ENCODE measurements at regions of chr6 and their contacts with region 1.

Region 1: GRCh38 chr6:149431905-149432775 is 32.1 kb downstream of the SUMO4 start:
- DNase-seq: peak; percentile 95
- H3K4me3 ChIP-seq: peak overlapping the region in 1 of 4 donors; percentile 10
- H3K27ac ChIP-seq: no peak overlapping the region
- H3K4me1 ChIP-seq: peaks cover 0 to 24% (median 9%) of the 10 kb centered on the region in 4 donors
- H3K27me3 ChIP-seq: no peaks in the 10 kb centered on the region
- CTCF ChIP-seq: peak; percentile 90 to 97 (median 96)
- EP300 ChIP-seq: no peak
- POLR2A ChIP-seq: no peak

Region 2: DNA sequence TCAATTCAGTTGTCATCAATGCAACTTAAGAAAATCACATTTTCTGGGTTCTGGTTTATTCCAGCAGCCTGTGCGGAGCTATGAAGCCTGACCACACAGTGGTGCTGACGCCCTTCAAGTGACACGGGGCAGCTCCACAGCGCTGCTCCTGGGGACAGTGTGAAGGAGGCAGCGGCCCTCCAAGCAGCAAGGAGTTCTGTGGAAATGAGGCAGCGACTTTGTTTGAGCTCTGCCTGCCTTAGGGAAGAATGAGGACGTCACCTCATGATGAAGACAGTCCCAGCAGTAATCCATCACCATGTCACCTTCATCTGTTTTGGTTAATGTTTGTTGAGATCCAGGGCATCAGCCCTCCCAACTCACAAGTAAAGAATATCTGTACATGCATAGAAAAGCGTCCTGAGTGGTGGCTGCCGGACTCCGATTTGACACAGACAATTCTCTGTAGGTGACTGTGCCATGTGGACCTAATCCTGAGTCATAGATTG is 853.9 kb before region 1 on chr6:
- intact Hi-C with region 1: loop called (anchors 10 kb)
- DNase-seq: peak; percentile 92
- H3K4me3 ChIP-seq: no peak overlapping the region
- H3K27ac ChIP-seq: peak overlapping the region in 1 of 4 donors; percentile 27
- H3K4me1 ChIP-seq: peaks cover 0 to 13% (median 4%) of the 10 kb centered on the region in 4 donors
- H3K27me3 ChIP-seq: no peaks in the 10 kb centered on the region
- CTCF ChIP-seq: peak; percentile 81 to 91 (median 84)
- EP300 ChIP-seq: no peak
- POLR2A ChIP-seq: no peak

Region 3: DNA sequence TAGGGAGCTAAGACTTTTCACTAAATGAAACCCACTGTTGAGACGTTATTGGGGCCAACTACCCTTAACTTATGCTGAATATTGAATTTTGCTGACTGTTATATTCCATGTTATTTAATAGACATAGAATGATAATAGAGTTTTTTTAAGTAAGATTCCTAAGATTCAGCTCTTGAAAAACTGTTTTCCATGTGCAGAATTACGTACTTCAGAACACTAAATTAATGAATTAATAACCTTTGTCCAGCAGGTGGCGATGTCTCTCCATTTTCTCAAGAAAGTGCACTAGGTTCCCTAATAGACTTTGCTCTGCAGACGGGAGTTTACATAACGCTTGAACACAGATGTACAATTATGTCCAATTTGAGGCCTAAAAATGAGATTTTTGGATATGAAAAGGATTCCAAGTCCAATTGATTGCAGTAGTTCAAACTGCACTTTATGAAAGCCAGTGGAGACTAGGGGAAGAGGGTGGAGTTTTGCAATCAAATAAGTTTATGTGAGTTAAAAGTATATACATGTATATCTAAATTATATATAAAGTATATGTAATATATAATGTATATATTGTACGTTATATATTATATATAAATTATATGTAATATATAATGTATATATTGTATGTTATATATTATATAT is 403.3 kb before region 1 on chr6:
- intact Hi-C with region 1: loop called (anchors 1 kb)
- DNase-seq: peak; percentile 85
- H3K4me3 ChIP-seq: no peak overlapping the region
- H3K27ac ChIP-seq: peak overlapping the region in 1 of 4 donors; percentile 20
- H3K4me1 ChIP-seq: peaks cover 0 to 23% (median 20%) of the 10 kb centered on the region in 4 donors
- H3K27me3 ChIP-seq: no peaks in the 10 kb centered on the region
- CTCF ChIP-seq: peak; percentile 49 to 73 (median 66)
- EP300 ChIP-seq: no peak
- POLR2A ChIP-seq: no peak

Region 4: DNA sequence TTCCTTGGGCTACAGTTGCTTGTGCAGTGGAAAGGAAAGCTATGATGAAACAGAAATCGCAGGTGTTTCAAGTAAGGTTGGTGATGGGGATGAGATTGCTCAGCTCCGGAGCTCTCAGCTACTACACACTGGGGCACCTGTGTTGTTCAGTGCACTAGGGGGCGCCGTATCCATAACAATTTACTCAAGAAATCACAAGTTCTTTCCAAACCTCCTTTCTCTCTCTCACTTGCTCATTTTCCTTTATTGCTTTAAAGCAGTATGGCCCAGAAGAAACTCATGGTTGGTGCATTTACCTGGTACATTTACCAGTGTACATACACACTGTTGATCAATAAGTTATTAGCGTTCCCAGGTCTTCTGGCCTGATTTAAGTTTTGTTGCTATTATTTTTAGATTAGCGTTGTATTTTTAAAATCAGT is 349.8 kb before region 1 on chr6:
- intact Hi-C with region 1: loop called (anchors 1 kb)
- DNase-seq: peak; percentile 88
- H3K4me3 ChIP-seq: no peak overlapping the region
- H3K27ac ChIP-seq: no peak overlapping the region
- H3K4me1 ChIP-seq: peaks cover 0 to 44% (median 31%) of the 10 kb centered on the region in 4 donors
- H3K27me3 ChIP-seq: no peaks in the 10 kb centered on the region
- CTCF ChIP-seq: peak; percentile 60 to 79 (median 76)
- EP300 ChIP-seq: no peak
- POLR2A ChIP-seq: no peak

Region 5: DNA sequence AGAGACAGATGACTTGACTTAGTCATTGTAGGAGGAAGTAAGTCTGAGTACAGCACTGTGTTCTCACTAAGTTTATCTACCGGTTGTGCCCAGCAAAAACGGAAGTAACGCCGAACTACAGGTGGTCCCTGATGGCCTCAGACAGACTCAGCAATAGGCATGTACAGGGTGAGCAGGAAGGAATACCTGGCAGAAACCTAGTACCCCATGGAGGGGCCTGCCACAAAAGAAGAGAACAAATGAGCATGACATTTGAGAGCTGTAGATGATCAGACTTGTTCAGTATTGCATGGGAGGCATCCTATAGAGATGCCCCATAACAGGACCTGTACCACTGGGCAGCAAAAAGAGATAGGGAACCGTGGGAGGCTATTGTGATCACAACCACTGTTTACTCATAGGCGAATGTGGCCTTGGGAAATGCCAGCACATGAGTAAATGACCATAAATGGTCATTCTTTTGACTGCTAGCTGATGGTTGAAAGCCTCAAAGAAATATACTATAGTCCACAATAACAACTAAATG is 221.0 kb before region 1 on chr6:
- intact Hi-C with region 1: loop called (anchors 10 kb)
- DNase-seq: no peak
- H3K4me3 ChIP-seq: no peak overlapping the region
- H3K27ac ChIP-seq: peak overlapping the region in 3 of 4 donors; percentile 32 to 80 (median 62)
- H3K4me1 ChIP-seq: peaks cover 0 to 54% (median 41%) of the 10 kb centered on the region in 4 donors
- H3K27me3 ChIP-seq: no peaks in the 10 kb centered on the region
- CTCF ChIP-seq: no peak
- EP300 ChIP-seq: no peak
- POLR2A ChIP-seq: no peak

Region 6: DNA sequence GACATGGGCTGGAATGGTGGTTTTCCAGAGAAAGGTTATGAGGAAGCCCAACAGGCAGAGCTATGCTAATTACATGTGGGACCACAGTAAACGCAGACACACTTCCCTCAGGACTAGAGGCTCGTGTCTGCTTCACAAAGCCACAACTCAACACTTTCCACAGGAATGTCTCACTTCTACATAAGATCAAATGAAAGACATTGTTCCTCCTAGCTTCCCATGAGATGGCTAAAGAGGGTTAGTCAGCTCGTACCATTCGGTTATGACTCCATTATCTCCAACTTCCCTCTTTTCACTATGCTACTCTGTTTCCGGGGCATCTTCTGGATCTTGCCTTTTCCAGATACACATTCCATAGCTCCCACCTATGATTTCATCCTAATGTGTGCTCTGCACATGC is 81.8 kb after region 1 on chr6:
- intact Hi-C with region 1: loop called (anchors 2 kb)
- DNase-seq: no peak
- H3K4me3 ChIP-seq: no peak overlapping the region
- H3K27ac ChIP-seq: no peak overlapping the region
- H3K4me1 ChIP-seq: peaks cover 0 to 3% (median 0%) of the 10 kb centered on the region in 4 donors
- H3K27me3 ChIP-seq: no peaks in the 10 kb centered on the region
- CTCF ChIP-seq: no peak
- EP300 ChIP-seq: no peak
- POLR2A ChIP-seq: no peak